Psoas muscle (tissue), 8 donors: ENCODE measurements at regions of chr18 and their contacts with region 1.

Region 1: GRCh38 chr18:63016270-63016669 is 300.9 kb downstream of the PHLPP1 start:
- DNase-seq: no peak
- ATAC-seq: peak; percentile 51 to 83 (median 70)
- H3K4me3 ChIP-seq: no peak overlapping the region
- H3K27ac ChIP-seq: no peak overlapping the region
- H3K4me1 ChIP-seq: no peaks in the 10 kb centered on the region
- H3K27me3 ChIP-seq: no peaks in the 10 kb centered on the region
- CTCF ChIP-seq: peak; percentile 88

Region 2: GRCh38 chr18:62545098-62545497 is 471.2 kb before region 1 on chr18:
- intact Hi-C with region 1: no loop called
- DNase-seq: no peak
- ATAC-seq: no peak
- H3K4me3 ChIP-seq: no peak overlapping the region
- H3K27ac ChIP-seq: no peak overlapping the region
- H3K4me1 ChIP-seq: peaks cover 11% of the 10 kb centered on the region
- H3K27me3 ChIP-seq: no peaks in the 10 kb centered on the region
- CTCF ChIP-seq: no peak

Region 3: GRCh38 chr18:62898359-62898758 is 117.9 kb before region 1 on chr18:
- intact Hi-C with region 1: no loop called
- DNase-seq: no peak
- ATAC-seq: no peak
- H3K4me3 ChIP-seq: no peak overlapping the region
- H3K27ac ChIP-seq: no peak overlapping the region
- H3K4me1 ChIP-seq: no peaks in the 10 kb centered on the region
- H3K27me3 ChIP-seq: no peaks in the 10 kb centered on the region
- CTCF ChIP-seq: no peak

Region 4: GRCh38 chr18:63119647-63120046 is 103.4 kb after region 1 on chr18:
- intact Hi-C with region 1: loop called in 1 of 2 experiments (anchors 10 kb)
- DNase-seq: peak in 1 of 2 donors; percentile 64
- ATAC-seq: peak; percentile 68 to 89 (median 73)
- H3K4me3 ChIP-seq: no peak overlapping the region
- H3K27ac ChIP-seq: peak overlapping the region; percentile 74
- H3K4me1 ChIP-seq: peaks cover 32% of the 10 kb centered on the region
- H3K27me3 ChIP-seq: no peaks in the 10 kb centered on the region
- CTCF ChIP-seq: peak; percentile 65

Region 5: GRCh38 chr18:63439334-63439733 is 423.1 kb after region 1 on chr18:
- intact Hi-C with region 1: loop called (anchors 2 to 5 kb)
- DNase-seq: no peak
- ATAC-seq: peak; percentile 64 to 90 (median 72)
- H3K4me3 ChIP-seq: no peak overlapping the region
- H3K27ac ChIP-seq: no peak overlapping the region
- H3K4me1 ChIP-seq: no peaks in the 10 kb centered on the region
- H3K27me3 ChIP-seq: no peaks in the 10 kb centered on the region
- CTCF ChIP-seq: peak; percentile 81

Region 6: GRCh38 chr18:63444567-63444966 is 428.3 kb after region 1 on chr18:
- intact Hi-C with region 1: loop called (anchors 2 to 5 kb)
- DNase-seq: no peak
- ATAC-seq: peak in 3 of 4 donors; percentile 54 to 65 (median 64)
- H3K4me3 ChIP-seq: no peak overlapping the region
- H3K27ac ChIP-seq: no peak overlapping the region
- H3K4me1 ChIP-seq: no peaks in the 10 kb centered on the region
- H3K27me3 ChIP-seq: no peaks in the 10 kb centered on the region
- CTCF ChIP-seq: no peak